ENCODE measurements at regions of chr2 and their contacts with region 1.

Region 1: DNA sequence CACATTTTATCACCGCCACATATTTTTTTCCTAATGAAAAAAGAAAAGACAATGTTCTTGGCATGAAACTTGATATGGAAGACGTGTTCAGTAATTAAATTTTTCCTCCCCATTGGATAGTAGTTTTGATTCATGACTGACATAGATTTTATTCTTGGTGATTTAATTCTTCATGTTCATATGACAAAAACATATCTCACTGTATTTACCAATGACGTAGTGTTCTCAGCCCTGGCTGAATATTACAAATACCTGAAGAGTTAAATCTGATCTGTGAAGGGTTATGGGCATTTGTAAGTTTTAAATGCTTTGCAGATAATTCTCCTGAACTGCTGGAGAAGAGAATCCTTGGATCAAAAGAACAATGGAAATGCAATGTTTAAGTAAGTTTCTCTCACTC is 460.9 kb downstream of the DCDC2C start:
- DNase-seq: no peak
- ATAC-seq: no peak
- H3K4me3 ChIP-seq: no peak overlapping the region
- H3K27ac ChIP-seq: no peak overlapping the region
- H3K4me1 ChIP-seq: no peaks in the 10 kb centered on the region
- H3K27me3 ChIP-seq: no peaks in the 10 kb centered on the region
- CTCF ChIP-seq: no peak
- EP300 ChIP-seq: no peak
- POLR2A ChIP-seq: no peak
- RAD21 ChIP-seq: no peak

Region 2: DNA sequence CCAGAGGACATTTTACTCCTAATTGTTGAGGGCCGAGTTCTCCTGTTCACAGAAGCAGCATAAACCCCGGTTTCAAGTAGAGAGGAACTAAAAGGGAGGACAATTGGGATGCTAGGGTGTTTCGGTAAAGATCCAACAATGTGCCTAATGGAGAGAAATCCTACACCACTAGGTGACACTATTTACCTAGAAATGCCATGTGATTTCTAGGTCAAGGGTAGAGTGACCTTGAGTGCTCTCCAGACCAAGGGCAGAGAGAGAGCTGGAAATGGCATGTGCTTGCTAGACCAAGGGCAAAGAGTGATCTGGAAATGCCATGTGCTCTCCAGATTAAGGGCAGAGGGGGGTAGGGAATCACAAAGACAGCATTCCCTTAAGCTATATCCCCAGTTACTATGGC is 11.1 kb after region 1 on chr2:
- CTCF ChIA-PET with region 1: no interaction called
- POLR2A ChIA-PET with region 1: no interaction called
- in situ Hi-C with region 1: no loop called
- intact Hi-C with region 1: loop called (anchors 1 kb)
- DNase-seq: no peak
- ATAC-seq: no peak
- H3K4me3 ChIP-seq: no peak overlapping the region
- H3K27ac ChIP-seq: no peak overlapping the region
- H3K4me1 ChIP-seq: no peaks in the 10 kb centered on the region
- H3K27me3 ChIP-seq: no peaks in the 10 kb centered on the region
- CTCF ChIP-seq: no peak
- EP300 ChIP-seq: no peak
- POLR2A ChIP-seq: no peak
- RAD21 ChIP-seq: no peak

Measured in K562 (cell line).